ENCODE measurements at regions of chr14 and their contacts with region 1.

Region 1: GRCh38 chr14:52824507-52824906 is 33.1 kb upstream of the GNPNAT1 start:
- DNase-seq: no peak
- H3K4me3 Mint-ChIP-seq: no peak overlapping the region
- H3K27ac Mint-ChIP-seq: no peak overlapping the region
- H3K4me1 Mint-ChIP-seq: peaks cover 5% of the 10 kb centered on the region
- H3K27me3 Mint-ChIP-seq: peaks cover 3% of the 10 kb centered on the region

Region 2: DNA sequence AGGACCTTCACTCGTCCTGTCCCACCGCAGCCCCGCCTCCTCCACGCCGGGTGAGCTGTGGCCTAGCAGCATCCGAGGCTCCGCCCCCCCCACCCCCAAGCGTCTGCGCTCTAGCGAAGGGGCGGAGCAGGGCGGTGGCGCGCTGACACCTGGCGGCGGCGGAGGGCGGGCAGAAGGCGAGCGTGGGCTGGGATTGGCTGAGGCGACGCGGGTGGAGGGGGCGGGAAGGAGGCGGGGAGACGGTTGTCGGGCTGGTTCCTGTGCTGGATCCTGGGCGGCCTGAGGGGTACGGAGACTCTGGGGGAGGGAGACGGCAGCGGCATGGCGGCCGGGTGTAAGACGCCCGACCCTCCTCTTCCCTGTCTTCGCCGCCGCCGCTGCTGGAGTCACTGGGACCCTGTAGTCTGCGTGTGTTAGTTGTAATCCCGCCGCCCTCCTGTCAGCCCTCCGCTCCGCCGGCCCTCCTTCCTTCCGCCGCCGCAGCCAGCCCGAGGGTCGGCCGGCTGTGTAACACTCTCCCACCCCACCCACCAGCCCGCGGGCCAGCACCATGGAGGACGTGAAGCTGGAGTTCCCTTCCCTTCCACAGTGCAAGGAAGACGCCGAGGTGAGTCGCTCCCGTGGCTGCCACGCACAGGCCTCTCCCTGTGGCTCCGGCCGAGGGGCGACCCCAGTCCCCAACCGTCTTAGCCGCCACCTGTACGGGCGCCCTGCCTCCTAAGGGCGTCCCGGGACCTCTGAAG is 94.4 kb before region 1 on chr14 and contains the start of gene STYX:
- CTCF ChIA-PET with region 1: no interaction called
- POLR2A ChIA-PET with region 1: no interaction called
- intact Hi-C with region 1: no loop called
- DNase-seq: peak; percentile 99
- H3K4me3 Mint-ChIP-seq: peak within 1 kb of the TSS; percentile 87
- H3K27ac Mint-ChIP-seq: peak within 1 kb of the TSS; percentile 82
- H3K4me1 Mint-ChIP-seq: peaks cover 29% of the 10 kb centered on the region
- H3K27me3 Mint-ChIP-seq: no peaks in the 10 kb centered on the region
- total RNA-seq, gene STYX: 15.9 to 17.0 TPM

Region 3: GRCh38 chr14:52918486-52918885 is 94.0 kb after region 1 on chr14:
- CTCF ChIA-PET with region 1: no interaction called
- POLR2A ChIA-PET with region 1: no interaction called
- intact Hi-C with region 1: loop called (anchors 1 kb)
- DNase-seq: peak; percentile 18
- H3K4me3 Mint-ChIP-seq: no peak overlapping the region
- H3K27ac Mint-ChIP-seq: peak overlapping the region; percentile 35
- H3K4me1 Mint-ChIP-seq: peaks cover 25% of the 10 kb centered on the region
- H3K27me3 Mint-ChIP-seq: no peaks in the 10 kb centered on the region

Region 4: GRCh38 chr14:52961060-52961639 is 136.6 kb after region 1 on chr14:
- CTCF ChIA-PET with region 1: interaction called, 69 read pairs
- POLR2A ChIA-PET with region 1: no interaction called
- intact Hi-C with region 1: loop called (anchors 1 kb)
- DNase-seq: peak; percentile 65
- H3K4me3 Mint-ChIP-seq: no peak overlapping the region
- H3K27ac Mint-ChIP-seq: no peak overlapping the region
- H3K4me1 Mint-ChIP-seq: peaks cover 7% of the 10 kb centered on the region
- H3K27me3 Mint-ChIP-seq: no peaks in the 10 kb centered on the region

Region 5: GRCh38 chr14:53055003-53055402 is 230.5 kb after region 1 on chr14:
- CTCF ChIA-PET with region 1: interaction called, 9 read pairs
- POLR2A ChIA-PET with region 1: no interaction called
- intact Hi-C with region 1: loop called (anchors 2 kb)
- DNase-seq: no peak
- H3K4me3 Mint-ChIP-seq: no peak overlapping the region
- H3K27ac Mint-ChIP-seq: no peak overlapping the region
- H3K4me1 Mint-ChIP-seq: peaks cover 4% of the 10 kb centered on the region
- H3K27me3 Mint-ChIP-seq: no peaks in the 10 kb centered on the region

Region 6: GRCh38 chr14:53109105-53110041 is 284.9 kb after region 1 on chr14:
- CTCF ChIA-PET with region 1: interaction called, 3 read pairs
- POLR2A ChIA-PET with region 1: no interaction called
- intact Hi-C with region 1: loop called (anchors 1 kb)
- DNase-seq: peak; percentile 76
- H3K4me3 Mint-ChIP-seq: no peak overlapping the region
- H3K27ac Mint-ChIP-seq: no peak overlapping the region
- H3K4me1 Mint-ChIP-seq: peaks cover 23% of the 10 kb centered on the region
- H3K27me3 Mint-ChIP-seq: no peaks in the 10 kb centered on the region

Region 7: DNA sequence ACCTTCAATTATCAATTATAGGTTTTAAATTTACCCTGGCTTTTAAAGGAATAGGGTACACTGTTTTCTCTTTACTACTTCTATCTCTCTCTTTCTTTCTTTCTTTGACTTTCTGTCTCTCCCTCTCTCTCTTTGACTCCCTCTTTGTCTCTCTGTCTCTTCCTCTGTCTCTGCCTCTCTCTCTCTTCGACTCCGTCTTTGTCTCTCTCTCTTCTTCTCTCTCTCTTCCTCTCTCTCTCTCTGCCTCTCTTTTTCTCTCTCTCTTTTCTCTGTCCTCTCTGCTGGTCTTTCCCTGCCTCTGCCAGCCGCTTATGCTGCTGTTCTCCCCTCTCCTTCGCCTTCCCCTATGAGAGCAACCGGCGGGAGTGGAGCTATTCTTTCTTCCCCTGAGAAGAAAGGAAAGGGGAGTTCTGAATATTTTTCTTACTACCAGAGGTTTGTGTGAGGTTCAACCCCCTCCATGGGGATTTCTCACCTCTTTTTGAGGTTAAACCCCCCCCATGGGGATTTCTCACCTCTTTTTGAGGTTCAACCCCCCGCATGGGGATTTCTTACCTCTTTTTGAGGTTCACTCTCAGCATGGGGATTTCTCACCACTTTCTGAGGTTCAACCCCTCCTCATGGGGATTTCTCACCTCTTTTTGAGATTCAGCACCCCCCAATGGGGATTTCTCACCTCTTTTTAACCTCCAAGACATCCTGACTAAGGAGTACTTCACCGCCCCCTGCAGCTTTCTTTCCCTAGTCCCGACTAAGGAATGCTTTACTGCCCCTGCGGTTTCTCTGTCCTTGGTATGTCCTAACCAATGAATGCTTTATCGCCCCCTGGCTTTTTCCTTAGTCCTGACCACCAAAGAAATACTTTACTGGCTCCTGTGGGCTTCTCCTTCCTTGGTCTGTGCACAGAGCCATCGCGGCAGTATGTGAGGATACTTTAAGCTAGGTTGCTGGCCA is 356.0 kb after region 1 on chr14:
- CTCF ChIA-PET with region 1: no interaction called
- POLR2A ChIA-PET with region 1: no interaction called
- intact Hi-C with region 1: loop called (anchors 2 kb)
- DNase-seq: peak; percentile 75
- H3K4me3 Mint-ChIP-seq: peak overlapping the region; percentile 3
- H3K27ac Mint-ChIP-seq: peak overlapping the region; percentile 67
- H3K4me1 Mint-ChIP-seq: peaks cover 41% of the 10 kb centered on the region
- H3K27me3 Mint-ChIP-seq: no peaks in the 10 kb centered on the region

Region 8: DNA sequence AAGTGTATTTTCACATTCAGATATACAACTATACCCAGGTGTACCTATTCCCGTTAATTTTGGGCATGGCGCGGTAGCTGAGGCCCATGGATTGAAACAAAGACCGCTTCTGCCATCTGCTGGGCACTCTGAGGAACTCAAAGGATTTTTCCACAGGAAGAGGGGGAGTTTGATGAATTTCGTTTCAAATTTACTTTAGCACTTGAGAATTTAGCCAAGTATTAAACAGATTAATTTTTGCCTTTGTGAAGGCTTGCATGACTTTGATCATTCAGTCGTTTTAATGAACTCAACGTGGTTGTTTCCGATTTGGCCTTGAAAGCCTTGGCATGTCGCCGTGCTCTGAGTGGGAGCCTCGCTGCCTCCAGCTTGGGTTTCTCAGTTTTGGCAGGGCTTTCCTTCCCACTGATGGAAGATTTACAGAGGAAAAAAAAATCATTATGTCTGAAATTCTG is 481.8 kb after region 1 on chr14:
- CTCF ChIA-PET with region 1: interaction called, 9 read pairs
- POLR2A ChIA-PET with region 1: no interaction called
- intact Hi-C with region 1: loop called (anchors 1 kb)
- DNase-seq: peak; percentile 58
- H3K4me3 Mint-ChIP-seq: peak overlapping the region; percentile 55
- H3K27ac Mint-ChIP-seq: peak overlapping the region; percentile 40
- H3K4me1 Mint-ChIP-seq: peaks cover 6% of the 10 kb centered on the region
- H3K27me3 Mint-ChIP-seq: peaks cover 1% of the 10 kb centered on the region